ENCODE measurements at regions of chr10 and their contacts with region 1.

Region 1: GRCh38 chr10:91635401-91636400 is 2.8 kb upstream of the PPP1R3C start:
- DNase-seq: peak; percentile 55 to 74
- H3K4me3 ChIP-seq: no peak overlapping the region
- H3K4me3 Mint-ChIP-seq: no peak overlapping the region
- H3K27ac Mint-ChIP-seq: no peak overlapping the region
- H3K4me1 ChIP-seq: no peaks in the 10 kb centered on the region
- H3K4me1 Mint-ChIP-seq: no peaks in the 10 kb centered on the region
- H3K27me3 ChIP-seq: no peaks in the 10 kb centered on the region
- H3K27me3 Mint-ChIP-seq: peaks cover 2% of the 10 kb centered on the region
- CTCF ChIP-seq: peak; percentile 76 to 79

Region 2: GRCh38 chr10:91389636-91390512 is 245.8 kb before region 1 on chr10:
- CTCF ChIA-PET with region 1: no interaction called
- POLR2A ChIA-PET with region 1: no interaction called
- intact Hi-C with region 1: loop called (anchors 5 kb)
- DNase-seq: peak in 1 of 2 experiments; percentile 59
- H3K4me3 ChIP-seq: no peak overlapping the region
- H3K4me3 Mint-ChIP-seq: no peak overlapping the region
- H3K27ac Mint-ChIP-seq: no peak overlapping the region
- H3K4me1 ChIP-seq: peaks cover 5% of the 10 kb centered on the region; the same call in 1 of the 2 replicates
- H3K4me1 Mint-ChIP-seq: no peaks in the 10 kb centered on the region
- H3K27me3 ChIP-seq: peaks cover 1% of the 10 kb centered on the region; the same call in 1 of the 2 replicates
- H3K27me3 Mint-ChIP-seq: peaks cover 19% of the 10 kb centered on the region
- CTCF ChIP-seq: peak; percentile 49 to 53

Region 3: DNA sequence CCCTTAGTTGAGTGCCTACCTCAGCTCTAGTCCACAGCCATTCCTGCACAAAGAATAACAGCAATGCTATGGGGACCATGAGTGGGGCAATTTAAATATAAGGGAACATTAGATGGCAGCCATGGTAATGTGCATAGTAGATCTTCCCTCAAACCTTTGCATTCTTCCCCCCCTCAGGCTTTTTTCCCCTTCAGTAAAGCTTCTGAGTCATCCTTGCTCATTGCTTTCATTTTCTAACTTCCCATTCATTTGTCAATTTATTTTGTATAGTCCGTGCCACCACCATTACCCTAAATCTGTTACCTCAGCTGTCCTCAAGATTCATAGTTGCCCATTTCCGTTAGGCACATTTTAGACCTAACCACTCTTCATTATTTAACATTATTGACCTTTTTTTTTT is 214.8 kb before region 1 on chr10:
- CTCF ChIA-PET with region 1: no interaction called
- POLR2A ChIA-PET with region 1: no interaction called
- intact Hi-C with region 1: no loop called
- DNase-seq: no peak
- H3K4me3 ChIP-seq: no peak overlapping the region
- H3K4me3 Mint-ChIP-seq: no peak overlapping the region
- H3K27ac Mint-ChIP-seq: no peak overlapping the region
- H3K4me1 ChIP-seq: no peaks in the 10 kb centered on the region
- H3K4me1 Mint-ChIP-seq: no peaks in the 10 kb centered on the region
- H3K27me3 ChIP-seq: no peaks in the 10 kb centered on the region
- H3K27me3 Mint-ChIP-seq: peaks cover 3% of the 10 kb centered on the region
- CTCF ChIP-seq: no peak

Region 4: DNA sequence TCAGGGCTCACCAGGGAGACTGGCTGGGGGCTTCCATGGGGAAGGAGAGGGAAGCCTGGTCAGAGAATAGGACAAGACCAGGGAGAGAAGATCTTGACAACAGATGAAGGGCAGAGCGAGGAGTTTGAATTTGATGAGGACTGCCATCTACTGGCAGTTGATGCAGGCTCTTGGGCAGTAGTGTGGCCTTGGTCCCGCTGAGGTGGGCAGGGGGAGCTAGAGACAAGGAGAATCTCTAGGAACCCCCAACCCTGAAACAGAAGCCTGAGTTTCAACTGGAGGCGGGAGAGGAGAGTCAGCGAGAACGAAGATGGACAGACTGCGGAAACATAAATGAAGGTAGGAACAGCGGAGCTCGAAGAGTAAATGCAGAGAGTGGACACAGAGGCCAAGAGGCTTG is 83.8 kb before region 1 on chr10:
- CTCF ChIA-PET with region 1: interaction called, 5 read pairs
- POLR2A ChIA-PET with region 1: no interaction called
- intact Hi-C with region 1: loop called (anchors 1 kb)
- DNase-seq: peak in 1 of 2 experiments; percentile 44
- H3K4me3 ChIP-seq: no peak overlapping the region
- H3K4me3 Mint-ChIP-seq: no peak overlapping the region
- H3K27ac Mint-ChIP-seq: no peak overlapping the region
- H3K4me1 ChIP-seq: peaks cover 7% of the 10 kb centered on the region
- H3K4me1 Mint-ChIP-seq: peaks cover 13% of the 10 kb centered on the region
- H3K27me3 ChIP-seq: no peaks in the 10 kb centered on the region
- H3K27me3 Mint-ChIP-seq: peaks cover 3% of the 10 kb centered on the region
- CTCF ChIP-seq: peak in 1 of 2 experiments; percentile 77

Measured in Caco-2 (cell line).